ENCODE measurements at regions of chr18 and their contacts with region 1.

Region 1: GRCh38 chr18:36809590-36810381 is 19.0 kb downstream of the TPGS2 start:
- DNase-seq: peak; percentile 37
- H3K4me3 Mint-ChIP-seq: no peak overlapping the region
- H3K27ac Mint-ChIP-seq: no peak overlapping the region
- H3K4me1 Mint-ChIP-seq: peaks cover 8% of the 10 kb centered on the region
- H3K27me3 Mint-ChIP-seq: no peaks in the 10 kb centered on the region

Region 2: GRCh38 chr18:36567800-36568199 is 242.0 kb before region 1 on chr18:
- CTCF ChIA-PET with region 1: no interaction called
- POLR2A ChIA-PET with region 1: no interaction called
- DNase-seq: no peak
- H3K4me3 Mint-ChIP-seq: no peak overlapping the region
- H3K27ac Mint-ChIP-seq: no peak overlapping the region
- H3K4me1 Mint-ChIP-seq: no peaks in the 10 kb centered on the region
- H3K27me3 Mint-ChIP-seq: peaks cover 34% of the 10 kb centered on the region

Region 3: GRCh38 chr18:36688020-36688965 is 121.5 kb before region 1 on chr18:
- CTCF ChIA-PET with region 1: interaction called, 30 read pairs
- POLR2A ChIA-PET with region 1: no interaction called
- DNase-seq: peak; percentile 58
- H3K4me3 Mint-ChIP-seq: no peak overlapping the region
- H3K27ac Mint-ChIP-seq: no peak overlapping the region
- H3K4me1 Mint-ChIP-seq: no peaks in the 10 kb centered on the region
- H3K27me3 Mint-ChIP-seq: peaks cover 11% of the 10 kb centered on the region

Region 4: GRCh38 chr18:36828630-36829361 is 19.0 kb after region 1 on chr18 and contains the starts of genes KIAA1328 and TPGS2:
- CTCF ChIA-PET with region 1: interaction called, 9 read pairs
- POLR2A ChIA-PET with region 1: interaction called, 13 read pairs
- DNase-seq: peak; percentile 93
- H3K4me3 Mint-ChIP-seq: peak within 1 kb of the TSS; percentile 83
- H3K27ac Mint-ChIP-seq: peak within 1 kb of the TSS; percentile 96
- H3K4me1 Mint-ChIP-seq: peaks cover 46% of the 10 kb centered on the region
- H3K27me3 Mint-ChIP-seq: no peaks in the 10 kb centered on the region
- total RNA-seq, gene KIAA1328: 7.4 to 8.6 TPM
- total RNA-seq, gene TPGS2: 110 TPM